Activated CD4-positive, alpha-beta T cell treated with anti-CD3 and anti-CD28 coated beads, Interleukin-2, amount 10 ng/mL, durations not matched to agents 24 days and 14 days (primary cell): ENCODE measurements at regions of chr3 and their contacts with region 1.

Region 1: DNA sequence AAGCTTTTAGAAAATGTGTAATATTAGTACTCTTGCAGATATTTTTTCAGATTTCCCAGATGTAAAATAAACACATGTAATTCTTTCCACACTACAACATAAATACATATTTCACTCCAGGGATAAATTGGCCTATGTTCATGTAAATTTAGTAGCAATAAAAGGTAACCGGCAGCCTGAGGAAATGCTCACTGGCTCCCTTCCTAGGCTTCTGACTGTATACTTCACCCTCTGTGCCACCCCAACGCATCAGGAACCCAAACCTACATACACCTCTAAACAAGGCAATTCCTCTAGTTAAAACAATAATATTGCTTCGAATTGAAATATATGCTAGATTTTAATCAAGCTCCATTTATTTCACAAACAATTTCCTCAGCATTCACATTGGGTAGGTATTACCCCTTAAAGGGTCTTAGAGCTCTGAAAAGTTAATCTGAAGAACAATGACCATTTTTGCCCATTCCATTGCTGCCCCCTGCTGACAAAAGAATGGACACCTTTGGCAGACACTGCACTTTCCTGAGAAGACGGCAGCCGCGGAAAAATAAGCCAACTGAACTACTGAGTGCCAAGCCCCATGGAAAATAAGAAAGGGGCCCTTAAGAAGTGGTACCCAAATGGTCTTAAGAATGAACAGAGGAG is 212.5 kb downstream of the OSBPL10 start:
- DNase-seq: peak; percentile 88
- H3K4me3 Mint-ChIP-seq: peak overlapping the region; percentile 9
- H3K27ac Mint-ChIP-seq: no peak overlapping the region
- H3K4me1 Mint-ChIP-seq: peaks cover 54% of the 10 kb centered on the region
- H3K27me3 Mint-ChIP-seq: no peaks in the 10 kb centered on the region

Region 2: DNA sequence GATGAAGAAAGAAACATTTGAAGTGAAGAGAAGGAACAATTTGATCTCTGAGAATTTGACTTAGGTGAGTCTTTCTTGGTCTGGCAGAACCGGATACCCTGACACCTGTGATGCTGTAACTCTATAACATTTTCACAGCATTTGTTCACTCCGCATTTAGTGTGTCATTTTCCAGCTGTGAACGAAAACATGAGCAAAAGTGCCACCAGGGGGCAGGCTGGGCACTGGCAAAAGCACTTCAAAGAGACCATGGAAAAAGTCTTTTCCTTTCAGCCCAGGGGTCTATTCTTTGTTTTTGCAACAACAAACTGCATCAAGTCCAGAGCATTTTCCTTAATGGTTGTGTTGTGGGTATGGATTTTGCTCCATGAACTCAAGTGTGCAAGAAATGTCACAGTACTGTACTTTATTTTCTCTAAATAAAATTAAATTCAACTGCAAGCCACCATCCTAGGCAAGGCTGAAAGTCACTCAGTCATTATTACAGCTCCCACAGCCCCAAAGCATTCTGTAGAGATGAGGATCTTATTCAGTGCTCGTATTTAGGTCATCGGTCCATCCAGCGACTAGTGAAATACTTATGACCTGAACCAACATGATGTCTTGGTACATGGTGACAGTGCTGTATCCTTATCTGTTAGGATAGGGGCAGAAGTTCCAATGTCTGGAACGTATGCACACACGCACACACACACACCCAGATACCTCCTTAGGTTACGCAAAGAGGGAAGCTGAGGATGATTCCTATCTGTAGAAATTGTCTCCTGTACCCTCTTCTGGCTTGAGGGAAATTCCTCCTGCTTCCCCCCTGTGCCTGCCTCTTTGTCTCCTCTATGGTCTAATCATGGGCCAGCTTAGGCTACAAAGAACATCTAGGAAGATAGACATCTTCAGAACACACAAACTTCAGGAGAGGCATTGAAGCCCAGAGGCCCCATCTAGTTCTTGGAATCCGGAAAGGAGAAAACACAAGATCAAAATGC is 999.6 kb before region 1 on chr3:
- intact Hi-C with region 1: loop called (anchors 5 kb)
- DNase-seq: peak; percentile 90
- H3K4me3 Mint-ChIP-seq: no peak overlapping the region
- H3K27ac Mint-ChIP-seq: no peak overlapping the region
- H3K4me1 Mint-ChIP-seq: peaks cover 4% of the 10 kb centered on the region
- H3K27me3 Mint-ChIP-seq: peaks cover 25% of the 10 kb centered on the region

Region 3: DNA sequence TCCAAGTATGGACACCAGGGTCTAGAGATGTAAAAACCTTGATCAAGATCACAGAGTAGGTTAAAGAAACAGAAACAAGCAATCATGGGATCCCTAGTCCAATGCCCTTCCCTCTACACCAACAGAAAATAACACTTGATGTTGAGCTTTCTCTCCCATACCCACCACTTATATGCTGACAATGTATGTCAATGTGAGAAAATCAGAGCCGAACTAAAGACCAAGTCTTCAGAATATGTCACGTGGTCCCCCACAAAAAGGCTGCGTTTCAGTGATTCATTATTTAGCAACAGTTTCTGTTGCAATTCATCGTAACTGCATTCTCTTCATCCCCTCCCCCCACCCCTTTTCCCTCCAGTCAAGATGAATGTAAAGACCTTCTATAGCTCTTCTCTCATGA is 514.8 kb before region 1 on chr3:
- intact Hi-C with region 1: loop called (anchors 2 kb)
- DNase-seq: no peak
- H3K4me3 Mint-ChIP-seq: peak overlapping the region; percentile 61
- H3K27ac Mint-ChIP-seq: peak overlapping the region; percentile 93
- H3K4me1 Mint-ChIP-seq: peaks cover 51% of the 10 kb centered on the region
- H3K27me3 Mint-ChIP-seq: no peaks in the 10 kb centered on the region

Region 4: GRCh38 chr3:31550452-31551251 is 217.9 kb before region 1 on chr3:
- intact Hi-C with region 1: loop called (anchors 2 kb)
- DNase-seq: peak; percentile 73
- H3K4me3 Mint-ChIP-seq: no peak overlapping the region
- H3K27ac Mint-ChIP-seq: peak overlapping the region; percentile 10
- H3K4me1 Mint-ChIP-seq: peaks cover 61% of the 10 kb centered on the region
- H3K27me3 Mint-ChIP-seq: no peaks in the 10 kb centered on the region

Region 5: GRCh38 chr3:31610700-31611275 is 157.8 kb before region 1 on chr3:
- intact Hi-C with region 1: loop called (anchors 2 kb)
- DNase-seq: peak; percentile 58
- H3K4me3 Mint-ChIP-seq: no peak overlapping the region
- H3K27ac Mint-ChIP-seq: peak overlapping the region; percentile 44
- H3K4me1 Mint-ChIP-seq: peaks cover 35% of the 10 kb centered on the region
- H3K27me3 Mint-ChIP-seq: no peaks in the 10 kb centered on the region

Region 6: GRCh38 chr3:31918179-31919168 is 149.9 kb after region 1 on chr3:
- intact Hi-C with region 1: loop called (anchors 5 kb)
- DNase-seq: peak; percentile 71
- H3K4me3 Mint-ChIP-seq: peak overlapping the region; percentile 64
- H3K27ac Mint-ChIP-seq: peak overlapping the region; percentile 87
- H3K4me1 Mint-ChIP-seq: peaks cover 35% of the 10 kb centered on the region
- H3K27me3 Mint-ChIP-seq: no peaks in the 10 kb centered on the region

Region 7: GRCh38 chr3:32143849-32144757 is 375.5 kb after region 1 on chr3:
- intact Hi-C with region 1: loop called (anchors 5 kb)
- DNase-seq: peak; percentile 88
- H3K4me3 Mint-ChIP-seq: no peak overlapping the region
- H3K27ac Mint-ChIP-seq: no peak overlapping the region
- H3K4me1 Mint-ChIP-seq: peaks cover 14% of the 10 kb centered on the region
- H3K27me3 Mint-ChIP-seq: no peaks in the 10 kb centered on the region